ENCODE measurements at regions of chr12 and their contacts with region 1.

Region 1: DNA sequence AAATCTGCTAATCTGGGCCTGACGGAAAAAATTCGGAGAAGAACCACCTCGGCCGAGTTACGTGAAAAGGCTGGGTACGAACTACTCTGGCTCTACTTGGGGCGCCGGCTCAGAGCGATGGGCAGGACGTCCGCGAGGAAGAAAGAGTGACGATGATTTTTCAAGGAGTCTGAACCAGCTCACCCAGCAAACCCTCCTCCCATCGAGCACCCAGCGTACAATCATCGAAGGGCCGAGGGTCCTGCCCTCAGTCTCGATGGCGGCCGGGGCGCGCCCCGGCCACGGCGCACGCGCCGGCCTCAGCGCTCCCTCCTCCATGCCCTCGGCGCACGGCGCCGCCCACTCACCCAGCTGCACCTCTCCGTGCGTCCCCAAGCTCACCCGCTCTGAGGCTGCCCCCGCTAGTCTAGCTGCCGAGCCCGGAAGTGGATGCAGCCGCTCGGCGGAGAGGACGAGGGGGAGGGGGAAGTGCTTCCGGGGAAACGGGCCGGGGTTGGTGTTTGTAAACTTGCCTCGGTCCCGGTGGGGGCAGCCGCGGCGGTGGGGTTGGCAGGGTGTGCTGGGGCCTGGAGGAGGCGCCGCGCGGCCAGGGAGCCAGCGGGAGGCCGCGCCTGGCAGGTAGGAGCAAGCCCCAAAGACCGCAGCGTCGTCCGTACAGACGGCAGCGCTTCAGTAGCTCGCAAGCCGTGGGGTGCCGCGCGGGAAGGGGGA is at the starts of genes CSAD and ZNF740:
- DNase-seq: peak; percentile 99
- H3K4me3 ChIP-seq: peak within 1 kb of the TSS; percentile 91
- H3K27ac ChIP-seq: peak within 1 kb of the TSS; percentile 87
- H3K4me1 ChIP-seq: peaks cover 50% of the 10 kb centered on the region
- CTCF ChIP-seq: no peak
- total RNA-seq, gene CSAD: 18.9 and 25.8 TPM in 2 replicates
- total RNA-seq, gene ZNF740: 26.1 and 31.6 TPM in 2 replicates

Region 2: GRCh38 chr12:53200458-53201176 is 20.2 kb after region 1 on chr12:
- CTCF ChIA-PET with region 1: interaction called, 4 read pairs
- POLR2A ChIA-PET with region 1: interaction called, 41 read pairs
- intact Hi-C with region 1: loop called (anchors 1 kb)
- DNase-seq: peak; percentile 81
- H3K4me3 ChIP-seq: peak overlapping the region; percentile 55
- H3K27ac ChIP-seq: peak overlapping the region; percentile 98
- H3K4me1 ChIP-seq: peaks cover 78% of the 10 kb centered on the region
- CTCF ChIP-seq: no peak

Region 3: GRCh38 chr12:53220801-53221202 is 40.4 kb after region 1 on chr12:
- CTCF ChIA-PET with region 1: no interaction called
- POLR2A ChIA-PET with region 1: interaction called, 4 read pairs
- intact Hi-C with region 1: loop called (anchors 1 kb)
- DNase-seq: peak; percentile 90
- H3K4me3 ChIP-seq: peak overlapping the region; percentile 74
- H3K27ac ChIP-seq: peak overlapping the region; percentile 90
- H3K4me1 ChIP-seq: peaks cover 72% of the 10 kb centered on the region
- CTCF ChIP-seq: no peak